Activated T-helper 1 cell treated with anti-CD3 and anti-CD28 coated beads, Interleukin-12 subunit alpha, Interleukin-12 subunit beta, Interleukin-2, Interleukin-4 antibody, amounts not matched to agents 30 ng/mL and 10 ng/mL and 1 ng/mL, durations not matched to agents 14 hours and 24 hours and 36 hours (primary cell): ENCODE measurements at regions of chr17 and their contacts with region 1.

Region 1: GRCh38 chr17:3668279-3669085 is at the starts of genes EMC6 and TAX1BP3:
- DNase-seq: peak; percentile 100
- H3K4me3 Mint-ChIP-seq: peak within 1 kb of the TSS; percentile 98
- H3K27ac Mint-ChIP-seq: peak within 1 kb of the TSS; percentile 97
- H3K4me1 Mint-ChIP-seq: peaks cover 21% of the 10 kb centered on the region
- H3K27me3 Mint-ChIP-seq: peaks cover 2% of the 10 kb centered on the region
- total RNA-seq, gene EMC6: 63.6 and 73.3 TPM in 2 replicates
- total RNA-seq, gene TAX1BP3: 29.3 and 30.1 TPM in 2 replicates

Region 2: DNA sequence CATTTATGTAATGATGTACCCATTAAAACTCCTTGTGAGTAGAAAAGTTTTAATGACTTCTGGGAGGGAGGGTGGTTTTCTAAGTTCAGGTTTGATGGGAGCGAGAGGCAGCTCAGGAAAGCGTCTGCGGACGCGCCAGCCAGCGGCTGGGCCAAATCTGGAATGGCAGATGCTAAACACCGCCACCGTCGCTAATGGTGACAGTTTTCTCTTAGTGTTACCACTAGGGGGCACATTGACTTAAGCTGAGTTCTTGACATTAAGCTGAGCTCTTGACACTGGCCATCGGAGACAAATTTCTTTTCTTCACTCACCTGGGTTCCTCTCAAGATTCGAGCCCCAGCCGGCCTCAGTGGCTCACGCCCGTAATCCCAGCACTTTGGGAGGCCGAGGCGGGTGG is 66.0 kb before region 1 on chr17:
- intact Hi-C with region 1: loop called (anchors 1 kb)
- DNase-seq: no peak
- H3K4me3 Mint-ChIP-seq: no peak overlapping the region
- H3K27ac Mint-ChIP-seq: no peak overlapping the region
- H3K4me1 Mint-ChIP-seq: no peaks in the 10 kb centered on the region
- H3K27me3 Mint-ChIP-seq: no peaks in the 10 kb centered on the region

Region 3: DNA sequence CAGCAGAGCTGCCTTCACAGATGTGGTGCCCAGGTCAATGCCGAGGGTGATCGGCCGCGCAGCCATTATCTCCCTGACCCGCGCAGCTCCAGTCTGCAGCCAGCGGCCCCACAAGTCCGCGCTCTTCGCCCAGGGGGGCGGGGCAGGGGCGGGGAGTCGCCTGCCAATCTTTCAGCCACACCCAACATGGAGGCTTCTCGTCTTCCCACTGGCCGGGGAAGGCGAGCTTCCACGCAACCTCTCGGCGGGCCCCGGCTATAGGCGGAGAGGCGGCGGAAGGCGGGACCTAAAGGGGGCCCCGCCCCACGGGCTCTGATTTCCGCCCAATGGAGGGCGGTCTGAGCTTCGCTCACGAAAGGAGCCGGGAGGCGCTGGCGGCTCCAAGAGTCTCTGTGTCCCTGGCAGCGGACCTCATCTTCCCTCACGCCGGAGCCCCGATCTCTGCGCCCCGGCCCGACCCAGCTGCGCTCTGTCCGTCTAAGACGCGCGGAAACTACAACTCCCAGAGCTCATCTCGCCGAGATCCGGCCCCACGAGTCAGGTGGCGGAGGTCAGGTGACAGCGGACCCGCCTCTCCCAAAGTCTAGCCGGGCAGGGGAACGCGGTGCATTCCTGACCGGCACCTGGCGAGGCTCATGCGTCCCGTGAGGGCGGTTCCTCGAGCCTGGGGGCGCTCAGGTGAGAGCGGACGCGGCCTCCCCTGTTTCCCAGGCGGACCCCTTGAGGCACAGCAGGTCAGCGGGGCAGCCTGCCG is 32.2 kb before region 1 on chr17 and contains the starts of genes CTNS and SHPK:
- intact Hi-C with region 1: loop called (anchors 1 kb)
- DNase-seq: peak; percentile 95
- H3K4me3 Mint-ChIP-seq: peak within 1 kb of the TSS; percentile 95
- H3K27ac Mint-ChIP-seq: peak within 1 kb of the TSS; percentile 98
- H3K4me1 Mint-ChIP-seq: peaks cover 48% of the 10 kb centered on the region
- H3K27me3 Mint-ChIP-seq: no peaks in the 10 kb centered on the region
- total RNA-seq, gene CTNS: 47.5 and 55.3 TPM in 2 replicates
- total RNA-seq, gene SHPK: 20.0 and 21.5 TPM in 2 replicates

Region 4: DNA sequence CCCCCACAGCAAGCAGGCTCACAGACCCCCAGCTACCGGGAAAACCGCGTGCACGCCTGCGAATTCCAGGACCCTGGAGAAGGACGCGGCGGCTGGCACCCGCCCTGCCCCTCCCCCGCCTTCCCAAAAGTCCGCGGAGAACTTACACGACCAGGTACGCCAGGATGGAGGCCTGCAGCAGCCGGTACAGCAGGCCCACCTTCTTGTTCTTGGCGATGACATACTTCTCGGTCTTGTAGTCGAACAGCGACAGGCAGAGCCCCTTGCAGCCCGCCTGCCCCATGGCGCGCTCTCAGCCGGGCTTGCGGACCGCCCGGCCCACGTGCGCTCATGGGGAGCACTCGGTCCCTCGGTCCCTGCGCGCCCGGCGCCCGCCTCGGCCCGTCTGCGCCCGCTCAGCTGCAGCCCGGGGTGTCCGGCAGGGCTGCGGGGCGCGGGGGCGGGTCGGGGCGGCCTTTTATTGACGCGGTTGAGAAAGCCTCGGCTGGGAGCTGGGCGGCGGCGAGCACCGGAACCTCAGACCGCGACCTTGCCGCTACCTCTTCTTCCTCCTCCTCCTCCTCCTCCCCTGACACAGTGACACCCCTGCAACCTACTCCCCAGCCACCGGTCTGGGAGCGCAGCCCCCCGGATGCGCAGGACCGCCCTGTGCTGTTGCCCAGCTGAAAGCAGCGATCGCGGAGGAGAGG is 27.4 kb after region 1 on chr17 and contains the start of gene P2RX5:
- intact Hi-C with region 1: loop called (anchors 2 kb)
- DNase-seq: peak; percentile 49
- H3K4me3 Mint-ChIP-seq: peak within 1 kb of the TSS; percentile 98
- H3K27ac Mint-ChIP-seq: peak within 1 kb of the TSS; percentile 93
- H3K4me1 Mint-ChIP-seq: peaks cover 40% of the 10 kb centered on the region
- H3K27me3 Mint-ChIP-seq: no peaks in the 10 kb centered on the region
- total RNA-seq, gene P2RX5: 133 and 143 TPM in 2 replicates

Region 5: GRCh38 chr17:3710951-3711383 is 42.5 kb after region 1 on chr17:
- intact Hi-C with region 1: loop called (anchors 1 kb)
- DNase-seq: peak; percentile 83
- H3K4me3 Mint-ChIP-seq: peak overlapping the region; percentile 64
- H3K27ac Mint-ChIP-seq: peak overlapping the region; percentile 74
- H3K4me1 Mint-ChIP-seq: peaks cover 56% of the 10 kb centered on the region
- H3K27me3 Mint-ChIP-seq: no peaks in the 10 kb centered on the region

Region 6: GRCh38 chr17:3845621-3846441 is 177.3 kb after region 1 on chr17 and contains the start of gene NCBP3:
- intact Hi-C with region 1: loop called (anchors 1 kb)
- DNase-seq: peak; percentile 90
- H3K4me3 Mint-ChIP-seq: peak within 1 kb of the TSS; percentile 97
- H3K27ac Mint-ChIP-seq: peak within 1 kb of the TSS; percentile 97
- H3K4me1 Mint-ChIP-seq: peaks cover 16% of the 10 kb centered on the region
- H3K27me3 Mint-ChIP-seq: peaks cover 9% of the 10 kb centered on the region
- total RNA-seq, gene NCBP3: 54.2 and 56.0 TPM in 2 replicates

Region 7: GRCh38 chr17:3893003-3893719 is 224.7 kb after region 1 on chr17 and contains the start of gene CAMKK1:
- intact Hi-C with region 1: loop called (anchors 5 kb)
- DNase-seq: peak; percentile 90
- H3K4me3 Mint-ChIP-seq: peak within 1 kb of the TSS; percentile 82
- H3K27ac Mint-ChIP-seq: peak within 1 kb of the TSS; percentile 86
- H3K4me1 Mint-ChIP-seq: peaks cover 30% of the 10 kb centered on the region
- H3K27me3 Mint-ChIP-seq: no peaks in the 10 kb centered on the region
- total RNA-seq, gene CAMKK1: 6.1 and 7.8 TPM in 2 replicates